Tibial artery (tissue), 4 donors: ENCODE measurements at regions of chr15 and their contacts with region 1.

Region 1: GRCh38 chr15:71409541-71409940 is 294.3 kb downstream of the THSD4 start:
- DNase-seq: no peak
- H3K4me3 ChIP-seq: no peak overlapping the region
- H3K27ac ChIP-seq: peak overlapping the region; percentile 23 to 32
- H3K4me1 ChIP-seq: peaks cover 0 to 55% (median 17%) of the 10 kb centered on the region in 4 donors
- H3K27me3 ChIP-seq: no peaks in the 10 kb centered on the region
- CTCF ChIP-seq: no peak

Region 2: GRCh38 chr15:72751751-72752455 is 1342.4 kb after region 1 on chr15:
- intact Hi-C with region 1: loop called (anchors 5 kb)
- DNase-seq: no peak
- H3K4me3 ChIP-seq: no peak overlapping the region
- H3K27ac ChIP-seq: no peak overlapping the region
- H3K4me1 ChIP-seq: peaks cover 0 to 7% (median 2%) of the 10 kb centered on the region in 4 donors
- H3K27me3 ChIP-seq: no peaks in the 10 kb centered on the region
- CTCF ChIP-seq: no peak